ENCODE measurements at regions of chrX and their contacts with region 1.

Region 1: DNA sequence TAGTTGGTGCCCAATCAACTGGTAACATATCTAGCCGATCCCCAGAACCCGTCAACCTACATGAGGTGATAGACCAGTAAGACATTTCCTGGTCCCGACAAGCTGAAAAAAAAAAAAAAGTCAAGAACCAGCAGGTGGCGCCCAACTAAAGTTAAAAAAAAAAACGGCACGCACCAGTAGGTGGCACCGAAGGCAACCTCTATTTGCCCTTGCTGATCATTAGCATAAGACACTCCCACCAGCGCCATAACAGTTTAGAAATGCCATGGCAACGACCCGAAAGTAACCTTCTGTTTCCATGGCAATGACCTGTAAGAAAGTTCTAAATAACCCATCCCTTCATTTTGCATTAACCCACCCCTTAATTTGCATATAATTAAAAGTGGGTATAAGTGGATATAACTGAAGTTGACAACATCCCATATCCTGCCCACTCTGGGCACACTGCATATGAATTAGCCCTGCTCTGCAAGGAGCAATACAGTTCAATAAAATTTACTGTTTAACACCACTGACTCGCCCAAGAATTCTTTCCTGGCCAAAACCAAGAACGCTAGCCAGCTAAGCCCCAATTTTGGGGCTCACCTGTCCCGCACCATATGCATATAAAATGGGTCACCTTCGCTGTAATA is 83.9 kb upstream of the SPANXB1 start:
- DNase-seq: peak; percentile 36
- H3K4me3 ChIP-seq: no peak overlapping the region
- H3K27ac ChIP-seq: no peak overlapping the region
- H3K4me1 ChIP-seq: no peaks in the 10 kb centered on the region
- H3K27me3 ChIP-seq: no peaks in the 10 kb centered on the region
- CTCF ChIP-seq: peak; percentile 85
- EP300 ChIP-seq: no peak
- RAD21 ChIP-seq: peak; percentile 69

Region 2: GRCh38 chrX:140804292-140804691 is 114.2 kb before region 1 on chrX:
- CTCF ChIA-PET with region 1: no interaction called
- POLR2A ChIA-PET with region 1: no interaction called
- DNase-seq: no peak
- H3K4me3 ChIP-seq: no peak overlapping the region
- H3K27ac ChIP-seq: no peak overlapping the region
- H3K4me1 ChIP-seq: no peaks in the 10 kb centered on the region
- H3K27me3 ChIP-seq: no peaks in the 10 kb centered on the region
- CTCF ChIP-seq: no peak
- EP300 ChIP-seq: no peak
- RAD21 ChIP-seq: no peak

Region 3: DNA sequence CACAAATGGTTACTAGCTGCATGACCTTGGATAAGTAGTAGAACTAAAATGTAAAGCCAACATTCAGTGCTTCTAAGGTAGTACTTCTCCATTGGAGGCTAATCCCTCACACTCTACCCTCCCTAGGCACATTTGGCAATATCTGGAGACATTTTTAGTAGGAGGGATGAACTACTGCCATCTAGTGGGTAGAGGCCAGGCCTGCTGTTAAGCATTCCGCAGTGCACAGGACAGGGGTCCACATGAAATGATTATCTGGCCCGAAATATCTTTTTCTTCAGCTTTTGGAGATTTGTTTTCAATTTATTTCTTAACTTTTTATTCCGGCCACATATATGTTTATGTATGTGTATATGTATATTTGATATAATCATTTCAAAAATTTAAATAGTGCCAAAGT is 359.8 kb after region 1 on chrX:
- CTCF ChIA-PET with region 1: interaction called, 62 read pairs
- POLR2A ChIA-PET with region 1: no interaction called
- DNase-seq: peak; percentile 38
- H3K4me3 ChIP-seq: no peak overlapping the region
- H3K27ac ChIP-seq: no peak overlapping the region
- H3K4me1 ChIP-seq: no peaks in the 10 kb centered on the region
- H3K27me3 ChIP-seq: peaks cover 7% of the 10 kb centered on the region; the same call in 1 of the 2 replicates
- CTCF ChIP-seq: peak; percentile 84
- EP300 ChIP-seq: no peak
- RAD21 ChIP-seq: peak; percentile 71

Measured in SK-N-SH (cell line).